Psoas muscle (tissue), 8 donors: ENCODE measurements at regions of chr1 and their contacts with region 1.

Region 1: GRCh38 chr1:248807067-248807737 is 18.5 kb downstream of the SH3BP5L start:
- DNase-seq: peak in 1 of 2 donors; percentile 75
- ATAC-seq: peak; percentile 64 to 83 (median 79)
- H3K4me3 ChIP-seq: no peak overlapping the region
- H3K27ac ChIP-seq: no peak overlapping the region
- H3K4me1 ChIP-seq: no peaks in the 10 kb centered on the region
- H3K27me3 ChIP-seq: no peaks in the 10 kb centered on the region
- CTCF ChIP-seq: peak; percentile 74

Region 2: DNA sequence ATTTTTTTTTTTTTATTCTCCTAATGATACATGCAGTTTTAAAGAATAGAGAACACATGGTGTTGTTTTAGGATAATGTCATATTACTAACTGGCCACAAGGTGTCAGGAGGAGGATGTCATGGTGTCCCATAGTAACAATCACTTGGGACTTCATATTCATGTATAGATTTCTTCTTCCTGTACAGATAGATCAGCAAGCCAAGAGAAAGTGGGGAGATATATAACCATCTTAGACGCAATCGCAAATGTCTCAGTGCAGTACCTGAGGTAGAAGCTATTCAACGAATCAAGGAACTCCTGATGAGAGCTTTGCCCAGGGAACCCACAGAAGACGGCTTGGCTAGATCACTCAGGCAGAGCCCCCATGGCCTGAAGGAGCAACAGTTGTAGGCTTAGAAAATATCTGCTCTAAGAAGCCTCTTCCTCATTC is 184.6 kb before region 1 on chr1:
- intact Hi-C with region 1: loop called in 1 of 2 experiments (anchors 2 kb)
- DNase-seq: no peak
- ATAC-seq: no peak
- H3K4me3 ChIP-seq: no peak overlapping the region
- H3K27ac ChIP-seq: no peak overlapping the region
- H3K4me1 ChIP-seq: no peaks in the 10 kb centered on the region
- H3K27me3 ChIP-seq: no peaks in the 10 kb centered on the region
- CTCF ChIP-seq: peak; percentile 52

Region 3: GRCh38 chr1:248696261-248696660 is 110.9 kb before region 1 on chr1:
- intact Hi-C with region 1: loop called in 1 of 2 experiments (anchors 5 kb)
- DNase-seq: no peak
- ATAC-seq: no peak
- H3K4me3 ChIP-seq: no peak overlapping the region
- H3K27ac ChIP-seq: no peak overlapping the region
- H3K4me1 ChIP-seq: no peaks in the 10 kb centered on the region
- H3K27me3 ChIP-seq: peaks cover 0 to 4% (median 0%) of the 10 kb centered on the region in 3 donors
- CTCF ChIP-seq: no peak

Region 4: GRCh38 chr1:248739572-248740205 is 67.5 kb before region 1 on chr1:
- intact Hi-C with region 1: no loop called
- DNase-seq: no peak
- ATAC-seq: no peak
- H3K4me3 ChIP-seq: no peak overlapping the region
- H3K27ac ChIP-seq: no peak overlapping the region
- H3K4me1 ChIP-seq: no peaks in the 10 kb centered on the region
- H3K27me3 ChIP-seq: no peaks in the 10 kb centered on the region
- CTCF ChIP-seq: no peak

Region 5: GRCh38 chr1:248825909-248826760 is 18.9 kb after region 1 on chr1 and contains the start of gene SH3BP5L:
- intact Hi-C with region 1: no loop called
- DNase-seq: peak; percentile 92 to 96
- ATAC-seq: peak; percentile 92 to 94 (median 93)
- H3K4me3 ChIP-seq: peak within 1 kb of the TSS; percentile 83
- H3K27ac ChIP-seq: peak within 1 kb of the TSS; percentile 95
- H3K4me1 ChIP-seq: peaks cover 47% of the 10 kb centered on the region
- H3K27me3 ChIP-seq: no peaks in the 10 kb centered on the region
- CTCF ChIP-seq: peak; percentile 59
- total RNA-seq, gene SH3BP5L: 18.6 to 27.9 (median 24.8) TPM